Activated naive CD4-positive, alpha-beta T cell treated with anti-CD3 and anti-CD28 coated beads for 36 hours (primary cell): ENCODE measurements at regions of chr4 and their contacts with region 1.

Region 1: GRCh38 chr4:99563310-99564186 is at the start of gene TRMT10A:
- DNase-seq: peak; percentile 97
- H3K4me3 Mint-ChIP-seq: peak within 1 kb of the TSS; percentile 93
- H3K27ac Mint-ChIP-seq: peak within 1 kb of the TSS; percentile 96
- H3K4me1 Mint-ChIP-seq: peaks cover 14% of the 10 kb centered on the region
- H3K27me3 Mint-ChIP-seq: peaks cover 6% of the 10 kb centered on the region
- total RNA-seq, gene TRMT10A: 8.8 to 9.2 TPM

Region 2: DNA sequence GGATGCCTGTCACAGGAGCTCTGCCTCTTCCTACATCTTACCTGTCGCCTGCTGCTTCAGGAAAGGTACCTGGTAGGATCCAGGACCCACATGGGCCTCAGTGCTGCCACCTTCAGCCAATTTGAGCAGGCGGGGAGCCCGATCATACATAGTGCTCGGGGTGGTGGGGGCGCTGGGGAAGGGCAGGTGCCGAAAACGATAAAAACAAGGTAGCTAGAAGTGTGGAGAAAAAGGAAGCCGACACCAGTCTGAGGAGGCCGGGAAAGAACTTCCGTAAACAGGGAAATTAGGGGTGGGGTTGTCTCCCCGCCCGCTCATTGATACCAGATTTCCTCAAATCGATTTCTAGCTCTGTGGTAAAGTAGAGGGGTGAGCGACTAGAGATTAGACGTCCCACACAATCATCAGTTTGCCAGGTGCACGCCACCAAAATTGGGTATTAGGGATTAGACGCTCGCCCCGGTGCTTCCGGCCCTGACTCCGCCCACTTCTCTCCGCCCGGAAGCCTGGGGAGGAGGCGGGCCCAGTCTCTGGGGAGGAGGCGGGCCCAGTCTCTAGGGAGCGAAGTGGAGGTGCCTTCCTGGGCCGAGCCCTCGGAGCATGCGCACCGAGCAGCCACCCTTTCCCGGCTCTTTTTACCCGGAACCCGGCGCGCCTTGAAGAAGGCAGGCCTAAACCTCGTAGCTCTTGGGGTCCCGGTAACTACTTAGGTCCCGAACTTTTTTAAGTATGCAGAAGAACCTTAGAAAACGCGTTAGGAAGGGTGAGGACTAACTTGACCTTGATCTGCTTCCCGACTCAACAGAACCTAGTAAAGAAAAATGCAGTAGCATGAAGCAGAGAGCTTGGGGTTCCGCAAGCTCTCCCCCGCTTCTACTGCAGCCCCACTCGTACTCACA is 1420.3 kb before region 1 on chr4 and contains the start of gene STPG2:
- CTCF ChIA-PET with region 1: no interaction called
- intact Hi-C with region 1: loop called (anchors 1 kb)
- DNase-seq: peak; percentile 95
- H3K4me3 Mint-ChIP-seq: peak within 1 kb of the TSS; percentile 96
- H3K27ac Mint-ChIP-seq: peak within 1 kb of the TSS; percentile 99
- H3K4me1 Mint-ChIP-seq: peaks cover 19% of the 10 kb centered on the region
- H3K27me3 Mint-ChIP-seq: no peaks in the 10 kb centered on the region
- total RNA-seq, gene STPG2: not detected

Region 3: DNA sequence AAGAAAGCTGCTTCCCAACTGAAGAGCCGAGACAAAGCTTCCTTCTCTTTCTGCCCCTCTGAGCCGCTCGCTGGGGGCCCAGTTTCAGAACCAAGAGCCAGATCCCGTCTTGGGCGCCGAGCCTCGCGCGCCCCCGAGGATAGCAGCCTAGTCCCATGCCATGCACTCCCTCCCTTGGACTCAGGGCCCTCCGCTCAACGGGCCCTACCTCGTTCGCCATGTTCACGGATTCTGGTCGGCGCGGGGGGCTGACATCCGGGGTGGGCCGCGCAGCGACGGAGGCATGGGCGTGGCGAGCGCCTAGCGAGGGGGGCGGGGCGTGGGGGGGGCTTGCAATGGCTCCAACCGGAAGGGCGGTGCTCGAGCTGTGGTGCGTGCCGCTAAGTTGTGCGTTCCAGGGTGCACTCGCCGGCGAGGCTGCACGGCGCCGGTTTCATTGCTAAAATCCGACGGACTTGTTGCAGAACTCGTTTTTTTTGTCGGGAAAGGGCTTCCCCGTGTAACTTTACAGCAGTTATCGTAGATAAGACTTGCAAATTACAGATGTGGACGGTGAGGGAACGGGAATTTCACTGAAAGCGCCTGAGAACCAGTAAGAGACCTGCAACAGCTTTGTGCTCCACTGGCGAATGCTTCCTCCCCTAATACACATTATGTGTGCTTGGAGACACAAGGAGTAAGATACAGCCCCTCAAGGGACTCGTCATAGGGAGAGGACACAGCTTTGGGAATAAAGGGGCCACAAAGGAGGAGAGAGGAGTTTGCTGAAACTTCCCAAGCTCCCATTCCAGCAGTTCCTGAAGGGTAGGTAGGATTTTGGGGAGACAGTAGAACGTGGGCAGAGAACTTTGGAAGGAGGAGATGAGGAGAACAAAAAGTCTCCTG is 474.8 kb before region 1 on chr4 and contains the start of gene ADH5:
- CTCF ChIA-PET with region 1: no interaction called
- intact Hi-C with region 1: loop called (anchors 2 kb)
- DNase-seq: peak; percentile 92
- H3K4me3 Mint-ChIP-seq: peak within 1 kb of the TSS; percentile 96
- H3K27ac Mint-ChIP-seq: peak within 1 kb of the TSS; percentile 95
- H3K4me1 Mint-ChIP-seq: peaks cover 32% of the 10 kb centered on the region
- H3K27me3 Mint-ChIP-seq: no peaks in the 10 kb centered on the region
- total RNA-seq, gene ADH5: 94.3 to 99.9 TPM

Region 4: GRCh38 chr4:99624141-99624719 is 60.7 kb after region 1 on chr4:
- CTCF ChIA-PET with region 1: no interaction called
- intact Hi-C with region 1: no loop called
- DNase-seq: peak; percentile 18
- H3K4me3 Mint-ChIP-seq: no peak overlapping the region
- H3K27ac Mint-ChIP-seq: no peak overlapping the region
- H3K4me1 Mint-ChIP-seq: no peaks in the 10 kb centered on the region
- H3K27me3 Mint-ChIP-seq: peaks cover 4% of the 10 kb centered on the region

Region 5: GRCh38 chr4:99710681-99711345 is 147.3 kb after region 1 on chr4:
- CTCF ChIA-PET with region 1: no interaction called
- intact Hi-C with region 1: loop called (anchors 5 kb)
- DNase-seq: peak; percentile 33
- H3K4me3 Mint-ChIP-seq: no peak overlapping the region
- H3K27ac Mint-ChIP-seq: no peak overlapping the region
- H3K4me1 Mint-ChIP-seq: peaks cover 8% of the 10 kb centered on the region
- H3K27me3 Mint-ChIP-seq: peaks cover 7% of the 10 kb centered on the region

Region 6: DNA sequence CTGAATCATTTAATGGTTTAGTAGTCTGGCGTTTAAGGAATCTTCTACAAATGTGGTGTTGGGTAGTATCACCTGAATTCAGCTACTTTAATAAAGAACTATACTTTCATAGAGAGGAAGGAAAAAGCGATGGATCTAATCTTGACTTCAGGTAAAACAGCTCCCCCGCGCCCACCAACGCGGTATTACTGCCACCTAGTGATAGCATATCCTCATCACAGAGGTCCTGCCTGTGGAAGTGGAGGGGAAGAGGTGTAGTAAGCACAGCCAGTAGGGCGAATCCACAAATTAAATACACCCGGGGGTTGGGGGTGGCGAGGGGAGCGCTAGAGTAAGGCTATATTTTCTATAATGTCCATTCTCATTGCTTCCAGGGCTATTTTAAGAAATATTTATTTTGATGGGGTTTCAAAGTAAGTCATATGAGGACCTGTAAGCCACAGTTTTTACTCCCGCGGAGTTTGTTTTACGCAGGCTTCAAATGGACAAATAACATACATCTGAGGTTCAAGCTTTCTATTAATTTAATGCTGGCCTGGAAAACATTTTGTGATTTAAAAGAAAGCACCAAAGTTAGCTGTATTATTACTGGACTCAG is 244.8 kb after region 1 on chr4:
- CTCF ChIA-PET with region 1: interaction called, 24 read pairs
- intact Hi-C with region 1: loop called (anchors 1 kb)
- DNase-seq: peak; percentile 87
- H3K4me3 Mint-ChIP-seq: no peak overlapping the region
- H3K27ac Mint-ChIP-seq: no peak overlapping the region
- H3K4me1 Mint-ChIP-seq: peaks cover 14% of the 10 kb centered on the region
- H3K27me3 Mint-ChIP-seq: peaks cover 8% of the 10 kb centered on the region

Region 7: DNA sequence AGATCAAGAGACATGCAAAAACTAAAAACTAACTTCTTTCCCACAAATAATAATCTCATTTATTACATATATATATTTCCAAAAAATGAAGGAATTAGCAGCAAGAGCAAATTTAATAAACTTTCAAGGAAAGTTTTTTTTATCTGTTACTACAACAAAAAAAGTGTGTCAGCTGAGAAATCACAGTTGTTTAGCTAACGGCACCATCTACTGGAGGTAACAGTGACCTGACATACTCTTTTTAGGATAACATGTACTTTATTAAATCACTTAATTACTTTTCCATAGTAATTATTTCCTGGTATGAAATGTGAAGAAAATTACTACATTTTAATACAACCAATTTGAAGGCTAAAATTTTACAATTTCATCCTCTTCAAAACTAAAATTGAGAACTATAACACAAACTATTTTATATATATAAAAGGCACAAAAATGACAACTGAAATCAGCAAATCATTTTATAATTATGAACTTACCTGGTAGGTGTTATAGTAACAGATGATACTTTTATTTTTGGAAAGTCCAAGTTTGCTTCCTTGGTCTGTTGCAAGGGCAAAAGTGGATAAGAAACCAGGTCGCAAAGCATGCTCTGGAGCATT is 321.6 kb after region 1 on chr4:
- CTCF ChIA-PET with region 1: interaction called, 4 read pairs
- intact Hi-C with region 1: loop called (anchors 1 kb)
- DNase-seq: peak; percentile 57
- H3K4me3 Mint-ChIP-seq: no peak overlapping the region
- H3K27ac Mint-ChIP-seq: no peak overlapping the region
- H3K4me1 Mint-ChIP-seq: peaks cover 6% of the 10 kb centered on the region
- H3K27me3 Mint-ChIP-seq: no peaks in the 10 kb centered on the region

Region 8: GRCh38 chr4:100082852-100083251 is 519.3 kb after region 1 on chr4:
- CTCF ChIA-PET with region 1: no interaction called
- intact Hi-C with region 1: loop called (anchors 5 kb)
- DNase-seq: peak; percentile 35
- H3K4me3 Mint-ChIP-seq: no peak overlapping the region
- H3K27ac Mint-ChIP-seq: peak overlapping the region; percentile 89
- H3K4me1 Mint-ChIP-seq: peaks cover 72% of the 10 kb centered on the region
- H3K27me3 Mint-ChIP-seq: peaks cover 2% of the 10 kb centered on the region

Region 9: GRCh38 chr4:100391863-100392262 is 828.3 kb after region 1 on chr4:
- CTCF ChIA-PET with region 1: no interaction called
- intact Hi-C with region 1: no loop called
- DNase-seq: no peak
- H3K4me3 Mint-ChIP-seq: no peak overlapping the region
- H3K27ac Mint-ChIP-seq: no peak overlapping the region
- H3K4me1 Mint-ChIP-seq: no peaks in the 10 kb centered on the region
- H3K27me3 Mint-ChIP-seq: peaks cover 3% of the 10 kb centered on the region

Region 10: DNA sequence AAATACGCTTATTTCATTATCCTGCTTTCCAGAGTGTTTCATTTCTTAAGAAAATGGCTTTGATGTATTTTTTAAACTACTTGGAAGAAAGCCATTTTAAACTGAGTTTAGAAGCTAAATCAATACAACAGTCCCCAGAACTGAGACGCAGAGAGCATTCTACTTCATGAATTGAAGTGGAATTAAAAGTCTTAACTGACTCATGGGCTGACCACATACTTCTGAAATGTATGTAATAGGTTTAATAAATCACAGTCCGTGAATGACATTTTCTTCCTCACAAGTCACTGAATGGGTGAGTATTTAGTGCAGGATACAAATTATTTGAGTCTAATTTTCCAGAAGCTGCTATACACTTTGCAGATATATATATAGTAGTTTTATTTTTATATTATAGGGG is 898.7 kb after region 1 on chr4:
- CTCF ChIA-PET with region 1: no interaction called
- intact Hi-C with region 1: no loop called
- DNase-seq: no peak
- H3K4me3 Mint-ChIP-seq: no peak overlapping the region
- H3K27ac Mint-ChIP-seq: no peak overlapping the region
- H3K4me1 Mint-ChIP-seq: peaks cover 21% of the 10 kb centered on the region
- H3K27me3 Mint-ChIP-seq: no peaks in the 10 kb centered on the region